AG04450 (cell line): ENCODE measurements at regions of chr1 and their contacts with region 1.

Region 1: DNA sequence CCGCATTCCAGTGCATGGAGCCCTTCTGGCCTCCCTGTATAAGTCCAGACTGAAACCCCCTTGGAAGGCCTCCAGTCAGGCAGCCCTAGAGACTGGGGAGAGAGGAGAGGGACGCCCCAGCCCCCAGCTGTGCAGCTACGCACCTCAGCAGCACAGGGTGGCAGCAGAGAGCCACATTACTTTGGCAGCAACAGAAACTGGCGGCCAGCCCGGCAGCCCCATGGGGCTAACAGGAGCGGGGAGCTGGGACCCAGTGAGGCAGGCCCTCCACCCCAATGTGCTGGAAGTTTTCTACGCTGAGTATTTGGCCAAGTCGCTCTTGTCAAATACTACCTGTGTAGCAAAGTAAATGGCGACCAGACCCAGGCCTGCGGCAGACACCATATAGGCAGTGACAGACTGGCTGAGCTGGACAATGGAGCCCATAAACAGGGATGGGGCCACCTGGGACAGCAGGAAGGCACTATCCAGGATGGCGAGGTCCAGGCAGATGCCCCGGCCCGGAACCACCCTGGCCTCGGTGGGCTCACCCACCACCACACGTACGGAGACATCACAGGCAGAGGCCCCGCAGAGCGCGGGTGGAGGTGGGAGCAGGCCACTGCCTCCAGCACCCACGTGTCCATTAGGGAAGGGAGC is 21.2 kb downstream of the SLC45A3 start:
- DNase-seq: no peak
- H3K4me3 ChIP-seq: no peak overlapping the region
- H3K27ac ChIP-seq: no peak overlapping the region
- H3K27me3 ChIP-seq: no peaks in the 10 kb centered on the region
- CTCF ChIP-seq: peak; percentile 88

Region 2: DNA sequence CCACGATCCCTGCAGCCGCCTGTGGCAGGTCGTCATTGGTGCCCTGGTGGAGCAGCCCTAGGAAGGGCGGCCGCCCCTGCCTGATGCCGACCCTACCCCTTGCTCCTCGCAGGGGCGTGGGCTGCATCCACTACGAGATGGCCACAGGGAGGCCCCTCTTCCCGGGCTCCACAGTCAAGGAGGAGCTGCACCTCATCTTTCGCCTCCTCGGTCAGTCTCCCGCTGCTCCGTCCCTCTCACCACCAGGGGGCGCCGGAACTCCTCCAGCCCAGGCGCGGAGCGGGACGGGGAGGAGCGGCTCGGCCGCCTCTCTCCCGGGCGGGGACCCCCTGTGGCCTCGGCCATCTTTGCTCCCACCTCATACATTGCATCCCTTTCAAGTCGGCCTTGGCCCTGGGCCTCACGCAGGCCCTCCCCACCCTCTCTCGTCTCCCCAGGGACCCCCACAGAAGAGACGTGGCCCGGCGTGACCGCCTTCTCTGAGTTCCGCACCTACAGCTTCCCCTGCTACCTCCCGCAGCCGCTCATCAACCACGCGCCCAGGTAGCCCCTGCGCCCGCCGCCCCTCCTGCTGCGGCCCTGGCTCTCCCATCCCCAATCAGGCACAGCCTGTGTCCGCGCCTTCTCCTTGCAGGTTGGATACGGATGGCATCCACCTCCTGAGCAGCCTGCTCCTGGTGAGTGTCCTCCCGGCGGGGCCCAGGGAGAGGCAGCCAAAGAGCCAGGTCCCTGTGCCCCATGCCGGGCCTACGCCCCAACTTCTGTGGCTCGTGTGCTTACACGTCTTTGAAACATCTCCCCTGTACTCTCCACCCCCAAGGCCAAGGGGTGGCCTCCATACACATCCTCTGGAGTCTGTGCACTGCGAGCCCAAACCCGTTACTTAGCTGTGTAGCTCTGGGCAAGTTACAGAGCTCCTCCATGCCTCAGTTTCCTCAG is 129.9 kb before region 1 on chr1:
- CTCF ChIA-PET with region 1: interaction called, 169 read pairs
- POLR2A ChIA-PET with region 1: no interaction called
- DNase-seq: peak; percentile 29
- H3K4me3 ChIP-seq: peak overlapping the region; percentile 50
- H3K27ac ChIP-seq: no peak overlapping the region
- H3K27me3 ChIP-seq: peaks cover 13% of the 10 kb centered on the region
- CTCF ChIP-seq: peak; percentile 85

Region 3: GRCh38 chr1:205600085-205600484 is 59.0 kb before region 1 on chr1:
- CTCF ChIA-PET with region 1: interaction called, 489 read pairs
- POLR2A ChIA-PET with region 1: no interaction called
- DNase-seq: peak; percentile 38
- H3K4me3 ChIP-seq: no peak overlapping the region
- H3K27ac ChIP-seq: peak overlapping the region; percentile 93
- H3K27me3 ChIP-seq: no peaks in the 10 kb centered on the region
- CTCF ChIP-seq: peak; percentile 50

Region 4: DNA sequence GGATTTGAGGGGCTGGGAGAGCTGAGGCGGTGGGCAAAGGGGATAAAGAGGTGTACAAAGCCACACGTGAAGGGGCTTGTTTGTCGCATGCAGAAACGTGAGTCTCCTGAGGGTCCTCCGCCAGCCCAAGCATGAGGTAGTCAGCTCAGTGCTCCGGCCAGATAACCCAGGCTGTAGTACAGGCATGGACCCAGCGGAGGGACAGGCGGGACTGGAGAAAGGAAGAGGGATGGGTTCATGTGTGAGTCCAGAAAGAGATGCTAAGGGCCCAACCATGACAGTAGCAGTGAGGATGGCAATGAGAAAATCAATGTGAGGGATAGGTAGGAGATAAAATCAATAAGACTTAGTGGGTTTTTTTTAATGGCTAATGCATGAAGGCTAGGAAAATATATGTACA is 13.5 kb before region 1 on chr1:
- CTCF ChIA-PET with region 1: interaction called, 35 read pairs
- POLR2A ChIA-PET with region 1: no interaction called
- DNase-seq: no peak
- H3K4me3 ChIP-seq: no peak overlapping the region
- H3K27ac ChIP-seq: no peak overlapping the region
- H3K27me3 ChIP-seq: no peaks in the 10 kb centered on the region
- CTCF ChIP-seq: no peak

Region 5: GRCh38 chr1:205791568-205792180 is 132.6 kb after region 1 on chr1:
- CTCF ChIA-PET with region 1: interaction called, 15 read pairs
- POLR2A ChIA-PET with region 1: no interaction called
- DNase-seq: no peak
- H3K4me3 ChIP-seq: no peak overlapping the region
- H3K27ac ChIP-seq: no peak overlapping the region
- H3K27me3 ChIP-seq: no peaks in the 10 kb centered on the region
- CTCF ChIP-seq: peak; percentile 90